Activated CD4-positive, alpha-beta memory T cell treated with anti-CD3 and anti-CD28 coated beads for 36 hours (primary cell): ENCODE measurements at regions of chr6 and their contacts with region 1.

Region 1: DNA sequence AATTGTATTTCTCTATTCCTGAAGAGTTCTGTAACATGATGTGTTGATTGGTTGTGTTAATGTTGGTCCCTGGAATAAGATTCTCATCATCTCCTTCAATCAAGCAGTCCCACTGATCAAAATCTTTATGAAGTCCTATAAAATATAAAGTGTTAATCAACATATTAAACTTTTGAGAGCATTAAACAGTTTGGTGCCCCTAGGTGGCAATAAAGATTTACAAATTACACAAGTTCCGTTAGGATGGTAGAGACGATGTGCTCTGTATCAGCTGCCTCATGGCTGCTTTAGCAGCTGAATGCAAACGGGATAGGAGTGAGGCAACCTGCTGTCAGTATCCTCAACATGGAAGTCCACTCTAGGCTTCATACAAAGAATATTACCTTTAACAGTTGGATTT is 16.9 kb downstream of the TDRD6 start:
- DNase-seq: no peak
- H3K4me3 Mint-ChIP-seq: no peak overlapping the region
- H3K27ac Mint-ChIP-seq: no peak overlapping the region
- H3K4me1 Mint-ChIP-seq: no peaks in the 10 kb centered on the region
- H3K27me3 Mint-ChIP-seq: peaks cover 21% of the 10 kb centered on the region

Region 2: DNA sequence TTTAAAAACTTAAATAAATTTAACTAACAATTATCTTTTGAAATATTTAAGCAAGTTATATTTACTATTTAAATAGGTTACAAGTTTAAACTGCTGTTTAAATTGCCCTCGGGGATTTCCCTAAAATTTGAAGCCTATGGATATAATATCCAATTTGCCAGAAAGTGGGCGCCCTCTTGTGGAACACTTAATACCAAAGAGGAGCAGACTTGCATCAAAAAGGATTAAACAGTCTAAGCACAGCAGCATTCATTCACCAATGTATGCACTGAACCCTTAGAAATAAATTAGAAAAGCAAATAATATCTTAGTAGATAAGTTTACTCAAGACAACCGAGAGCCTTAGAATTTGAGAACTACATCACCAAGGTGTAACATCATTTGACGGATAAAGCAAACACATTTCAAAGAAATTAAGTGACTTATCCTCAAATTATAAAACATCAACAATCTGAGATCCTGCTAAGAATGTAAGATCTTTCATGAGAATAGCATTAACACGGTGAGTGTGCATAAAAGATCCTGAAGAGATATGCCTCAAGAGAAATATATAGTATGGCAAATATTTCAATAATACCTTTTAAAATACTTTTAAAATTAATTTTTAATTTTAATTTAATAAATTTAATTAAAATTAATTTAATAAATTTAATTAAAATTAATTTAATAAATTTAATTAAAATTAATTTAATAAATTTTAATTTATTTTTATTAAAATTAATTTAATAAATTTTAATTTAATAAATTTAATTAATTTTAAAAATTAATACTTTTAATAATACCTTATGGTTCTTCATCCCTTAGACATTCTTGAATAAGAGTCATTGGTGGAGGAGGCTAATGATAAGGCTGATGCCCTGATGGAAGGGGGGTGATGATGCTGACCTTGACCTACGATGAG is 77.2 kb after region 1 on chr6:
- CTCF ChIA-PET with region 1: no interaction called
- POLR2A ChIA-PET with region 1: no interaction called
- intact Hi-C with region 1: loop called (anchors 2 kb)
- DNase-seq: peak; percentile 24
- H3K4me3 Mint-ChIP-seq: no peak overlapping the region
- H3K27ac Mint-ChIP-seq: no peak overlapping the region
- H3K4me1 Mint-ChIP-seq: no peaks in the 10 kb centered on the region
- H3K27me3 Mint-ChIP-seq: peaks cover 3% of the 10 kb centered on the region

Region 3: GRCh38 chr6:47000842-47001241 is 296.3 kb after region 1 on chr6:
- CTCF ChIA-PET with region 1: no interaction called
- POLR2A ChIA-PET with region 1: no interaction called
- intact Hi-C with region 1: no loop called
- DNase-seq: no peak
- H3K4me3 Mint-ChIP-seq: no peak overlapping the region
- H3K27ac Mint-ChIP-seq: no peak overlapping the region
- H3K4me1 Mint-ChIP-seq: no peaks in the 10 kb centered on the region
- H3K27me3 Mint-ChIP-seq: peaks cover 14% of the 10 kb centered on the region

Region 4: GRCh38 chr6:47047479-47048407 is 343.2 kb after region 1 on chr6:
- CTCF ChIA-PET with region 1: no interaction called
- POLR2A ChIA-PET with region 1: no interaction called
- intact Hi-C with region 1: loop called (anchors 10 kb)
- DNase-seq: peak; percentile 31
- H3K4me3 Mint-ChIP-seq: no peak overlapping the region
- H3K27ac Mint-ChIP-seq: no peak overlapping the region
- H3K4me1 Mint-ChIP-seq: no peaks in the 10 kb centered on the region
- H3K27me3 Mint-ChIP-seq: peaks cover 4% of the 10 kb centered on the region